Adrenal gland (tissue), 19 donors: ENCODE measurements at regions of chr9 and their contacts with region 1.

Region 1: DNA sequence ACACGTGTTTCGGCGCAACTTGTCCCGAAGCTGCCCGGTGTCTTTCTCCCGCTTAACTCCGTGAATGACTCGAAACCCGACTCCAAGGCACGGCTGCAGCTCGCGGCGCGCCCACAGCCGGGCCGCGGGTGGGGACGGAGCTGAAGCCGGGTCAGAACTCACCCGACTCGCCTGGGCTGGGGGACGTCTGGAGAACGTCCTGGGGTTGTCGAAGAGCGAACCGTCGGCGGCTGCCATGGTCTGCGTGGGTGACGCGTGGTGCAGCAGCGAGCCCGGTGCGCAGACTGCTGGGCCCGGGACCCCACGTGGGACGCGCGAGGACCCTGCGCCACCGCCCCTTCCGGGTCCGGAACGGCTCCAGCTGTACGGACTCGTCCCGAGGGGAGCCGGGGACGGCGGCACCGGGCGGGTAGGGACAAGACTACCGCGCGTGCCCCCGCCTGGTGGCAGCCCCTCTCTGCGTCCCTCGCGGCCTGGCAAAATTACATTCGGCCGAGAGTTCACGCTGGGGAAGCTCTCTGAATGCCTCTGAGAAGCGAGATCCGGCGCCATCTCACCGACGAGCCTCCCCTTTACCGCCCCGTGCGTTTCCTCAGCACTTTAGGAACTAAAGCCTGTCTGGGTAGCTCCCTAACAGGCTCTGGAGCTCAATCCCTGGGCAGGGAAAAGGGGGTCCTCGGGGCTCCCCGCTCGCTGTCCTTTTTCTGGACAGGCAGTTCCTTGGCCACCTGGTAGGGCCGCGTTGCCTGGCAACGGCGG is at the start of gene DDX31:
- DNase-seq: peak; percentile 86 to 93 (median 89)
- H3K4me3 ChIP-seq: peak within 1 kb of the TSS; percentile 71 to 88 (median 82)
- H3K27ac ChIP-seq: peak within 1 kb of the TSS; percentile 89 to 98 (median 93)
- H3K4me1 ChIP-seq: peaks cover 16 to 47% of the 10 kb centered on the region in 2 donors
- H3K27me3 ChIP-seq: no peaks in the 10 kb centered on the region
- CTCF ChIP-seq: peak in 2 of 6 experiments; percentile 0 to 14
- POLR2A ChIP-seq: peak; percentile 29 to 63
- total RNA-seq, gene DDX31: 7.4 to 12.3 (median 9.6) TPM

Region 2: DNA sequence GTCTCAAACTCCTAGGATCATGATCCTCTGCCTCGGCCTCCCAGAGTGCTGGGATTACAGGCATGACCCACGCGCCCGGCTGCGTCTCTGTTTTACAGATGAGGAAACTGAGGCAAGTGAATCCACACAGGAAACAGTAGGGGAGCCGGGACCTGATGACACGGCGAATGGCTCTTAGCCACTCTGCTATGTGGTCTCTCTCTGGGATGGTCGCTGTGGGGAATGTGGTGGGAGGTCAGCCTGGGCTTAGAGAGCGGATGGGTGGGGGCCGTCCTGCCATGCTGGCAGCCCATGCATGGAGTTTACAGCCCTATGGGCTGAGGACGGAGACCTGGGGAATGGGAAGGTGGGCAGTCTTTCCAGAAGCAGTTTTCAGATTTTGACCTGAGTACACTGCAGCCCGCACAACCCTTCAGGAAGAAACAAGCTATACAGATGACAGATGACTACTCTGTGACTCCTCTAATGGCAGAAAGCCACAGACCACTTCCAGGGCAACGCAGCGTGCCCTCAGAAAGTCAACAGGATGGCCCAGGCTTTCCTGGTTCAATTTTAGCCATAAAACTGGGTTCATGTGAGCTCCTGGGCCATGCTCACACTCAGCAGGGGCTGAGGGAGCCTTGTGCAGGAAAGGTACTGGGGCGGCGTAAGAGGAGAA is 793.9 kb before region 1 on chr9:
- intact Hi-C with region 1: no loop called
- DNase-seq: no peak
- H3K4me3 ChIP-seq: no peak overlapping the region
- H3K27ac ChIP-seq: no peak overlapping the region
- H3K4me1 ChIP-seq: no peaks in the 10 kb centered on the region
- H3K27me3 ChIP-seq: no peaks in the 10 kb centered on the region
- CTCF ChIP-seq: no peak
- POLR2A ChIP-seq: no peak

Region 3: DNA sequence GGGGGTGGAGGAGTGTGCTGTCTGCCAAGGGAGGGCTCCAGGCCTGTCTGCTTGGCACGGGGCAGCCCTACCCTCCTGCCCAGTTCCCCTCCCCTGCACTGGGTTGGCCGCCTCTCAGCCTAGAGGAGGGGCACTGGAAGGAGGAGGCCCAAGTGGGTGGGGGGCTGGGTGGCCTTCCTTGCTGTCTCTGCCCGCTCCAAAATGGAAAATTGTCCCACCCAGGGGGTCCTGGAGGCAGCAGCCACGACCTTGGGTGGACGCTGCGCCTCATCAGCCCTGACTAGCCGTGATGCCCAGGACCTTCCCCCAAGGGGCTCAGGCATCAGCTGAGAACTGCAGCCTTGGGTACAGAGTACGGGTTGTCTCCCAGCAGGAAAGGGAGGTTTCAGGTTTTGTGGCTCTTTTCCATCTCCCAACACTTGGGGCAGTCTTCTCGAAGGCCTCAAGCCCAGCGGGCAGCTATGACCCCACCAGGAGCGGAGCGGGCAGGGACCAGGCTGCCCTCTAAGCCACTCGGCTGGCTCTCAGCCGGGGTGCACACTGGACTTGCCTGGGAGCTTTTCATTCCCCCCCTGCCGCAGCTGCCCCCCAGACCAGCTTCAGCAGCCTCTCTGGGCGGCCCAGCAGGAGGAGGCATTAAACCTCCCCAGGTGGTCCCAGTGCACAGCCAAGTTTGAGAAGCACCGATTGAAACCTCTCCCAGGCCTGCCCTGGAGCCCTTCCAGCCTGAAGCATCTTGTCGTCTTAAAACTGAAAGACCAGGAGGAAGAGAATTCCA is 487.4 kb before region 1 on chr9:
- intact Hi-C with region 1: no loop called
- DNase-seq: peak in 1 of 7 donors; percentile 61
- H3K4me3 ChIP-seq: no peak overlapping the region
- H3K27ac ChIP-seq: peak overlapping the region in 1 of 5 donors; percentile 59
- H3K4me1 ChIP-seq: peaks cover 4 to 6% of the 10 kb centered on the region in 2 donors
- H3K27me3 ChIP-seq: no peaks in the 10 kb centered on the region
- CTCF ChIP-seq: no peak
- POLR2A ChIP-seq: no peak

Region 4: DNA sequence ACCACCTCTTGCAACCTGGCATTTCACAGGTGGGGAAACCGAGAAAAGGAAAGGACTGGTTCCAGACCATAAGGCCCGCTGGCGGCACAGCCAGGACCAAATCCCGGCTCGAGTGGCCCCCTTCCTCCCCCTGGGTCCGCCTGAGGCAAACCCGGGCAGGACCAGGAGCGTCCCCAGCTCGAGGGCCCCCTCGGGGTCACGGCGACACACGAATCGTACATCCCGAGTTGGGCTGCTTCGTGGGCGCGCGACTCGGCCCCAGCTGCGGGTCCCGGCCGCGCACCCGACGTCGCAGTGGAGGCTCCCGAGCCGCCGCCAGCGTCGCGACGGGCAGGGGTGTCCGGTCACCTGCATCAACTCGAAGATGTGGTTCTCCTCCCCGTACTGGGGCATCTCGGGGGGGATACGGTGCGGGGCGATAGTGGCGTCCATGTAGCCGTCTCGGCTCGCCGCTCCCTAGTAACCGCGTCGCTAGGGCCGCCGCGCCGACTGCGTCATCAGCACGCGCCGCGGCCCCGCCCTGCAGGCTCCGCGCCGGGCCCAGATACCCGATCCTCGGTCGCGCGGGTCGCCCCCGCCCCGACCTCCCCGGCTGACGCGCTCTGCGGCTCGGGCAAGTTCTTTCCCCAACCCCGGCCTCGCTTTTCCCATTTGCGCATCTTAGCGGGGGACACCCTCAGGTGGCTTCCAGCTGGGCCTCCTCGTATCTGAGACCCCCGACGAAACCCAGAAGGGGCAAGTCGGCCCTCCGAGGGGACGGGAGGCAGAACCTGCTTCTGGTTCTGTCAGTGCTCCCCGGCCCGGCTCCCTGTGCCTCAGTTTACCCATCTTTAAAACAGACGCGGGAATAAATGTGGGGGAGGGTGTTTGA is 208.2 kb after region 1 on chr9 and contains the start of gene AK8:
- intact Hi-C with region 1: loop called in 1 of 2 experiments (anchors 10 kb)
- DNase-seq: peak; percentile 57 to 83 (median 72)
- H3K4me3 ChIP-seq: peak within 1 kb of the TSS; percentile 63 to 95 (median 82)
- H3K27ac ChIP-seq: peak within 1 kb of the TSS in 3 of 5 donors; percentile 47 to 78 (median 71)
- H3K4me1 ChIP-seq: peaks cover 4 to 8% of the 10 kb centered on the region in 2 donors
- H3K27me3 ChIP-seq: no peaks in the 10 kb centered on the region
- CTCF ChIP-seq: no peak
- POLR2A ChIP-seq: peak; percentile 1 to 11
- total RNA-seq, gene AK8: 0.69 to 6.0 (median 1.7) TPM